ENCODE measurements at regions of chr17 and their contacts with region 1.

Region 1: GRCh38 chr17:43846221-43846712 is 709 bp upstream of the CD300LG start:
- DNase-seq: peak; percentile 89
- CTCF ChIP-seq: peak; percentile 97

Region 2: GRCh38 chr17:43816336-43817320 is 29.6 kb before region 1 on chr17:
- CTCF ChIA-PET with region 1: interaction called, 12 read pairs
- POLR2A ChIA-PET with region 1: no interaction called
- DNase-seq: no peak
- CTCF ChIP-seq: no peak

Region 3: DNA sequence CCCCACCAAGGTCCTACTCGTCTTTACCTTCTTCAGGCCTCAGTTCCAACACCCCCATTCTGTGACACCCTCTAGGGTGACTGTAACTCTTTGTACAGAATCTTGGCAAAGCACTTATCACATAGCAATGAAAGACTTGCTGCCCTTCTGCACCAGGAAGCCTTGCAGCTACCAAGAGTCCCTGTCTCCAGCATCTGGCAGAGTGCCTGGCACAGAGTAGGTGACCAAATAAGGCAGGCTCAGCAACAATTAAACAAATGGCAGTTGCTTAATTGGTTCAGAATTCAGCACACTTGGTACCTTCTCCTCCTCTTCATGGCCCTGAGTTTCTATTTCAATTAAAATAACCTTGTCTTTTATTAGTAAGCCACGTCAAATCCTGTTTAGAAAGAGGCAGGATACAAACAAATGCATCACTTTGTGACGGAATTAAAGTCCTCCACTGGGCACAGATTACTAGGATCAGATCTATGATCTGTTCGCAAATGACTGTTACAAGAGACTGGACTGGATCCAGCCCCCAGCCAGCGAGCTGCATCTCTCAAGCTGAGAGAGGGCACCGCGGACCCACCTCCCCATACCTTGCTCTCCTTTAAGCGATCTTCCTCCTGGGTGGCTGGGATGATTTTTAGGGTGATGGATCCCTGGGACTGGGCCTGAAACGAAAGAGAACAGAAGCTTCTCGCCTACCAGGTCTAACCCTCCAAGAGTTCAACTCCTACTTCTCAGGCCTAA is 22.8 kb before region 1 on chr17:
- CTCF ChIA-PET with region 1: interaction called, 44 read pairs
- POLR2A ChIA-PET with region 1: no interaction called
- DNase-seq: no peak
- CTCF ChIP-seq: no peak

Region 4: DNA sequence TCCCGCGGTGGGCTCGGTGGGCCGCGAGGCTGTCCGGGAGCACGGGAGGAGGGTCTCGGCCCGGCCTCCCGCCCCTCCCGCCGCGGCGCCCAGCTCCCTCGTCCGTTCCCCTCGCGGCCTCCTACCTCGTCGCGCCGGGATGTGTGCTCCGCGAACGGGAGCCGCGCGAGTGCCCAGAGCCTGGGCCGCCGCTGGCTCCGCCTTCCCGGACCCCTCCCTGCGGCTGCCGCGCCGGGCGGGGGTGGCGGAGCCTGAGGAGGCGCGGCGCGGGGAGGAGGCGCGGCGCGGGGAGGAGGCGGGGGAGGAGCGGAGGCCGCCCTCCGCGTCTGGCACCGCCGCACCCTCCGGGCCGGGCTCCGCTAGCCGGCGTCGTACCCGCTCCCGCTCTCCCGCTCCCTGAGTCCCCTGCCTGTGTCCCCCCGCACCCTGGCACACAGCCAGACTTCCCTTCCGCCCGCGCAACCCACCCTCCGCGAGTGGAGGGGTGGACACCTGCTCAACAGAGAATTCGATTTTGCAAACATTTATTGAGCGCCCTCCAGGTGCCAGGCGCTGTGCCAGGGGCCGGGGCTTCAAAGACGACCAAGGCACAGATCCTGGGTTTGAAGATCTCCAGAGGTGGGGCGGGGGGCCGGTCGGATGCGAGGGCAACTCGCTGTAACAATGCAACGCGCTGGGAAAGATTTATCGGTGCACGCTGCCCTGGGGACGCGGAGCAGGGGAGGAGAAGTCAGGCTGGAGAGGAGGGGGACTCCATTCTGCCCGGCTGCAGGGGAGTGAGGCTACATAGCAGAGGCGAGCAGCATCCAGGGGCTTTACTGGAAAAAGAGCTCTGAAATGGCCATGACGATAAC is 13.1 kb before region 1 on chr17 and contains the start of gene MPP3:
- CTCF ChIA-PET with region 1: interaction called, 44 read pairs
- POLR2A ChIA-PET with region 1: no interaction called
- DNase-seq: peak; percentile 40
- CTCF ChIP-seq: no peak

Region 5: GRCh38 chr17:43861024-43861621 is 14.9 kb after region 1 on chr17:
- CTCF ChIA-PET with region 1: interaction called, 46 read pairs
- POLR2A ChIA-PET with region 1: no interaction called
- DNase-seq: no peak
- CTCF ChIP-seq: no peak

Measured in GM10248 (cell line).